ENCODE measurements at regions of chr1 and their contacts with region 1.

Region 1: GRCh38 chr1:170531758-170532657 is at the start of gene GORAB:
- DNase-seq: peak; percentile 90
- H3K4me3 ChIP-seq: peak within 1 kb of the TSS; percentile 64
- CTCF ChIP-seq: no peak

Region 2: GRCh38 chr1:170510163-170510562 is 21.8 kb before region 1 on chr1:
- CTCF ChIA-PET with region 1: no interaction called
- POLR2A ChIA-PET with region 1: no interaction called
- DNase-seq: no peak
- H3K4me3 ChIP-seq: no peak overlapping the region
- CTCF ChIP-seq: no peak

Region 3: GRCh38 chr1:170520601-170521000 is 11.4 kb before region 1 on chr1:
- CTCF ChIA-PET with region 1: no interaction called
- POLR2A ChIA-PET with region 1: interaction called, 12 read pairs
- DNase-seq: no peak
- H3K4me3 ChIP-seq: no peak overlapping the region
- CTCF ChIP-seq: no peak

Region 4: GRCh38 chr1:171422511-171422910 is 890.5 kb after region 1 on chr1:
- CTCF ChIA-PET with region 1: no interaction called
- POLR2A ChIA-PET with region 1: no interaction called
- DNase-seq: no peak
- H3K4me3 ChIP-seq: no peak overlapping the region
- CTCF ChIP-seq: no peak